ENCODE measurements at regions of chr1 and their contacts with region 1.

Region 1: GRCh38 chr1:25520446-25521061 is 22.9 kb upstream of the LDLRAP1 start:
- DNase-seq: peak; percentile 68 to 83 (median 76)
- H3K4me3 ChIP-seq: no peak overlapping the region
- H3K27ac ChIP-seq: no peak overlapping the region
- H3K4me1 ChIP-seq: no peaks in the 10 kb centered on the region
- H3K27me3 ChIP-seq: no peaks in the 10 kb centered on the region

Region 2: GRCh38 chr1:25503551-25504426 is 16.8 kb before region 1 on chr1:
- CTCF ChIA-PET with region 1: interaction called, 47 read pairs
- POLR2A ChIA-PET with region 1: interaction called, 3 read pairs
- DNase-seq: peak; percentile 53 to 76 (median 73)
- H3K4me3 ChIP-seq: no peak overlapping the region
- H3K27ac ChIP-seq: no peak overlapping the region
- H3K4me1 ChIP-seq: peaks cover 2 to 17% (median 12%) of the 10 kb centered on the region in 4 experiments
- H3K27me3 ChIP-seq: no peaks in the 10 kb centered on the region

Region 3: DNA sequence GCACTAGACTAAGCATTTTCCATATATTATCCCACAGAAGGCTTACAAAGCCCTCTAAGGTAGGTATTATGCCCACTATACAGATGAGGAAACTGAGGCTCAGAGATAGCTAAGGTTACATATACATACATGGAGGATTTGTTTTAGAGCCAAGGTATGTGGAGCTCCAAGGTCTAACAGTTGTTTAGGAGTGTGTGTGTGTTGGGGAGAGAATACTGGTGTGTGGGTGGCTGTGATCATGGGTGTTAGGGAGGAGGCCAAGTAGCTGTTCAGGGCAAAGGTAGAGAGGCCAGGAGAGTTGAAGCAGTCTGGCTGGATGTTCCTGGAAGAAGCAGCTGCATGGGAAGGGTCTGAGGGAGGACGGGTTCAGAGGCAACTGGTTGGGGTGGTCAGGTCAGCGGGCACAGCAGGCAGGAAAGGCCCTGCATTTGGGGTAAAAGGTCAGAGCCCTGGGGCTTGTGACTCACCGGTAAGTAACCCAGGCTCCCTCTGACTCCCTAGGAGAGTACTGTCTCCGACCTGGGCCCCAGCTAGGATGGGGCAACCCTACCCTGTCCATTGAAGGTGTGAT is 17.7 kb after region 1 on chr1:
- CTCF ChIA-PET with region 1: interaction called, 10 read pairs
- POLR2A ChIA-PET with region 1: no interaction called
- DNase-seq: no peak
- H3K4me3 ChIP-seq: no peak overlapping the region
- H3K27ac ChIP-seq: no peak overlapping the region
- H3K4me1 ChIP-seq: peaks cover 0 to 6% (median 0%) of the 10 kb centered on the region in 4 experiments
- H3K27me3 ChIP-seq: no peaks in the 10 kb centered on the region

Region 4: DNA sequence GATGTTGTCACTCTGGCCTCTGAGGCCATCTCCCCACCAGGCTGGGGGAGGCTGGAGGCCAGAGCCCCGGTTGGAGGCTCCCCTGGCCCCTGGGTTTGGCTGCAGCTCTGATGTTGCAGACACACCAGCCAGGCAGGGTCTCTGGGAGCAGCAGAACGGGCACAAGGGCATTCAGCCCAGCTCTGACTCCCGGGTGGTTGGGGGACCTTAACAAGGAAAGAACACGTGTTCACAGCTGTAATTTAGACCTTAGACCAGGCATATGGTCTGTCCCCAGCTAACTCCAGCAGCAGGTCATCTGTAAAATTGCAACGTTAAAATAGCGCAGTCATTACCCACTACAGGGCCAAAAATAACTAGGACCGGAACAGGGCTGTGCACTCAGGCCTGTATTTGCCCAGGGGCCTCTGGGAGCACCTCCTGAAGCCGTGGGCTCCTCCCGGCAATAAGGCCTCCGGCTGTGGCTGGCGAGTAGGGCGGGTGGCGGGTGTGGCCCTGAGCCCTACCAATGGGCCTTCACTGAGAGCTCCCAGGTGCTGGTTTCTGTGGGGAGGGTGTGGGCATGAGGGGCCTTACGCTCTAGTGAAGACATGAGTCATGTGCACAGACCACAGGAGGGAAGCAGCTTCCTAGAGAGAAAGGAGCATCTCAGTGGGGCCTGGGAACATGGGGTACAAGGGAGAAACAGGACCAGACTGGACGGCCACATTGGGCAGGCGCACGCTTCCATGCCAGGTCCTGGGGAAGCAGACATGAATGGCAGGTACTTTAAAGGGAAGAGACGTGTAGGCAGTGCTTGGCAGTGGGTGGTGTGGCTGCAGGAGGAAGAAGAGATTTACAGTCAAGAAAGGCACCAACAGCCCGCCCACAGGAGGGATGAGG is 29.0 kb after region 1 on chr1:
- CTCF ChIA-PET with region 1: interaction called, 12 read pairs
- POLR2A ChIA-PET with region 1: no interaction called
- DNase-seq: peak; percentile 86 to 95 (median 92)
- H3K4me3 ChIP-seq: peak overlapping the region in 3 of 7 experiments; percentile 20 to 37 (median 23)
- H3K27ac ChIP-seq: peak overlapping the region; percentile 54 to 74
- H3K4me1 ChIP-seq: peaks cover 3 to 83% (median 50%) of the 10 kb centered on the region in 4 experiments
- H3K27me3 ChIP-seq: no peaks in the 10 kb centered on the region

Region 5: GRCh38 chr1:25580927-25581326 is 60.4 kb after region 1 on chr1:
- CTCF ChIA-PET with region 1: no interaction called
- POLR2A ChIA-PET with region 1: no interaction called
- DNase-seq: peak in 1 of 3 donors; percentile 31
- H3K4me3 ChIP-seq: no peak overlapping the region
- H3K27ac ChIP-seq: no peak overlapping the region
- H3K4me1 ChIP-seq: peaks cover 0 to 9% (median 2%) of the 10 kb centered on the region in 4 experiments
- H3K27me3 ChIP-seq: peaks cover 0 to 1% (median 0%) of the 10 kb centered on the region in 5 experiments

Measured in common myeloid progenitor, CD34-positive (primary cell).